ENCODE measurements at regions of chr3 and their contacts with region 1.

Region 1: DNA sequence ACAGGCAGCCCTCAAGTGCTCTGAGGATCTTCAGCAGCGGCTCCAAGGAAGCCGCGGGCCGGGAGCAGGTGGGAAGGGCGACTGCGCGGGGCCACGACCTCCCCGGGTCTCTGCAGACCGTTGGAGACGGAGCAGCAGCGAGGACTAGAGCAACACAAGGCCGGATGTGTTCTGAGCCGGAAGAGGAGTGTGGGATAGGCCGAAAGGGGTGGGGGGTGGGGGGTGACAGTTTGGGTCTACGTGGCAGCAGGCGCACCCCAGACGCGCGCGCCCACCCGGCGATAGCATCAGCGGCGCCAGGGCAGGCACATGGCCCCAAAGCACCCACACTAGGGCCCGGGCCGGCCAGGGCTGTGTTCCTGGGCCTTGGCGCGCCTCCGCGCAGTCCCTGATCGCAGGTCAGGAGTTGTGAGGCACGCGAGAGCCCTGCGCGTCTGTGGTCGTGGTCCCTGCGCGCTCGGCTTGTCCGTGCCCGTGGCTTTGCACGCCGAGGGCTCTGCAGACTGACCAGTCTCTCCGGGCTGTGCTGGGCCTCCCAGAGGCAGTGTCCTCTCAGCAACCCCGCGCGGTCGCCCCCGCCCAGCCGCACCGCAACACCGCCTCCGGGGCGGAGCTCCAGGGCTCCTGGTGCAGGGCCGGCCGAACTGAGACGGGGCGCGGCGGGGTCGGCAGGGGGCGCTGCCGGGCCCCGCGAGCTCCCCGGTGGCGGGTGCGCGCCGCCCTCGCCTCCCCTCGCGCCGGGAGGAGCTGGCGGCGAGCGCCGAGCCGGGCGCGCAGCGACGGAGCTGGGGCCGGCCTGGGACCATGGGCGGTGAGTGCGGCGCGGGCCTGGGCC is at the start of gene PXYLP1:
- DNase-seq: peak; percentile 96
- CTCF ChIP-seq: peak; percentile 84

Region 2: DNA sequence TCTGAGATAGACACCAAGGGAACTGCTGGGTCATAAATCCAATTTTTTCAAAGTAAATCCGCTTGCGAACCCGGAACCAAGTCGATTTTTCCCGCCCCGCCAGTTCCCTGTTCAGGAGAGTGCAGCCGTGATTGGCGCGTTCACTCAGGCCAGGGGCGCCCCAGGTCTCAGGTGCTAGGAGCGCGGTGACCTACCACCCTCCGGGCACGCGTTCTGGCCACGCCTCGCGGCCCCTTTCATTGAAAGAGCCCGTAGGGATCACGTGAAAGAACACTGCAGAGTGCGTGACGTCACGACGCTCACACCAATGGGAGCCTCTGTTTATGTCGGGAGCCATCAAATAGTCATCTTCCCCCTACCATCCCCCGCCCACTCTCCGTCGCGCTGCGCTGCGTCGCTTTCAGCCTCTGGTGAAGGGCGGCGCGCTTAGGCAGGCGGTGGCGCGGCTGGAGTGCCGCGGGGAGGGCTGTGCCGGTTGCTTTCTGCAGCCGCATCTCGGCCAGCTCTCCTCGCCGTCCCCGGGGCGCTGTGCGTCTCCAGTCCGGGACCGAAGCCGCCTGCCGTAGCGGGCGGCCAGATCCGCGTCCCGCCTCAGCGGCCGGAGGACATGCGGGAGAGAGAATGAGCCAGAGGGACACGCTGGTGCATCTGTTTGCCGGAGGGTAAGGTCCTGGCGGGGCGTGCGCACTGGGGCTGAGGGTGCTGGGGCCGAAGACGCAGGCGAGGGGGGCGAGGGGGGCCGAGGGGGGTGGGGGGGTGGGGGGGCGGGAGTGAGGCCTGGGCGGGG is 289.7 kb before region 1 on chr3 and contains the start of gene SLC25A36:
- CTCF ChIA-PET with region 1: interaction called, 11 read pairs
- POLR2A ChIA-PET with region 1: no interaction called
- DNase-seq: peak; percentile 95
- CTCF ChIP-seq: no peak

Region 3: DNA sequence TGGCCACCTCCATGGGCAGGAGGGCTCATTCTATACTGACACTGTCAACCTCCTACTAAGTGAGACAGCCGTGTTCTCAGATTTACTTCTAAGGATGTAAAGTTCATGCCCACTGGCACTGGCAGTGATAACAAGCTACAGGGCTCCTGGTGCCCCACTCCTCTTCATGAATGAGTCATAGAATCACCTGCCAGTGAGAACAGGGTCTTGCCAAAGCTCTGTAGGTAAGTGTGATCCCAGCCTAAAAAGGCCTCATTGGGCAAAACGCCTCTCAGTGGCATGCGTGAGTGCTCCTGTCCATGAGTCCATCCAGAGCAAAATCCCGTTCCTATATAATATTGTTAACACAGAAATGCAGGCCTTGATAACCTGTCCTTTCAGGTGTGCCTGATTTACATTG is 17.7 kb after region 1 on chr3:
- CTCF ChIA-PET with region 1: interaction called, 57 read pairs
- POLR2A ChIA-PET with region 1: no interaction called
- DNase-seq: no peak
- CTCF ChIP-seq: no peak

Region 4: DNA sequence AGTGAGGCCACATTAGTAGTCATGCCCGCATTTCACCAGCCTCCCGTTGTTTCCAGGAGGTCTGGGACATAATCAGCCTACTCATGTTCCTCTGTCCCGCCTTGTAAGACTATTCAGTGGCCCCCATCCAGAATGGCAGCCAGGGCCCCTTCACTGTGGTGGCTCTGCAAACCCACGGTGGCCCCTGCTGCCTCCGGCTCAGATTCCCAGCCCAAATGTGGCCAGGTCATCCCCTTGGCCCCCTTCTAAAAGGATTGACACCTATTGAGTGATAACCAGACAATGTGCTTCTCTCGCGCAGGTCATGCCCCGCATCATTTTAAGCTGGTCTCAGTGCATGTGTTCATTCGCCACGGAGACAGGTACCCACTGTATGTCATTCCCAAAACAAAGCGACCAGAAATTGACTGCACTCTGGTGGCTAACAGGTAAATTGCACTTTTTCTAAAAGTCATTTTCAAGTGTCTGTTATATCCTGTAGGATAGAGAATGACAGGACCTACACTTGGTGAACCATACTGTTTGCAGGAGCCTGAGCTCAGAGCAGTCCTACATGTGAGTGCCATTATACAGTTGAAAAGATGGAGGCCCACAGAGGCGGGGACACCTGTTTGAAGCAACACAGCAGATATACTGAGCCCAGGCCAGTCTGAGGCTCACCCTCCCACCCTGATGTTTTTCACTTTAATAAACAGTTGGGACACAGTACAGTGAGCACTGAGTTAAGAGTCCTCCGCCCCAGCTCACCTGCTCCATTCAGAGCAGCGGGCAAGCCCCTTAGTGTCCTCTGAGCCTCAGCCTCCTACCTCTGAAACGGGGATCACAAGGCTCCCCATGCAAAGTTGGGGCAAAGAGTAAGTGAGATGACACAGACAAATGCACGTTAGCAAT is 48.0 kb after region 1 on chr3:
- CTCF ChIA-PET with region 1: interaction called, 40 read pairs
- POLR2A ChIA-PET with region 1: no interaction called
- DNase-seq: peak; percentile 56
- CTCF ChIP-seq: peak; percentile 34

Region 5: GRCh38 chr3:141303481-141304223 is 72.3 kb after region 1 on chr3:
- CTCF ChIA-PET with region 1: interaction called, 22 read pairs
- POLR2A ChIA-PET with region 1: no interaction called
- DNase-seq: peak; percentile 78
- CTCF ChIP-seq: peak; percentile 63

Region 6: DNA sequence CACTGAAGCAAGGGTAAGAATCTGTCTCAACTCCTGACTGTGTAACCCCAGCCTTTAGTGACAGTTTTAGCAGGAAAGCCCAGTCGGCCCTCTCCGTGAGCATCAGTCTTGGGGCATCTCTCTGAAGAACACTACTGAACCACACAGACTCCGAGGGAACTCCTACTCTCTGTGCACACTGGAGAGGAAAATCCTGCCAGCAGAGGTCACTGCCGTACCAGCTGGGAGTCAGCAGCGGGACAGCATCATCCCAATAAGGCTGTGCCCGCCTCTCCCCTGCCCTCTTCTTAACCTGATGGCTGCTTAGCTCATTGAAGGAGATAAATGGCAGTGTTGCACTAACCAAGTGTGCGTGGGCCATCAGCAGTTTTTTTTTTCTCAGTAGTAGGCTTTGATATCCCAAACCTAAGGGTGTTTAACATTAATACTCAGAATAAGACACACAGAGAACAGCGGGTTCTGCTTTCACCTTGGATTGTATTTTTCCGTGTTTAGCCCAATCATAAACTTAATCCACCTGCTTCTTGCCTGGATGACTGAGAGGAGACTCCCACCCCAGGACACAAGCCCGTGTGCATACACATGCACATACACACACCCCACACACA is 228.9 kb after region 1 on chr3:
- CTCF ChIA-PET with region 1: interaction called, 19 read pairs
- POLR2A ChIA-PET with region 1: no interaction called
- DNase-seq: peak; percentile 81
- CTCF ChIP-seq: peak; percentile 86